HCT116 (cell line): ENCODE measurements at regions of chr14 and their contacts with region 1.

Region 1: DNA sequence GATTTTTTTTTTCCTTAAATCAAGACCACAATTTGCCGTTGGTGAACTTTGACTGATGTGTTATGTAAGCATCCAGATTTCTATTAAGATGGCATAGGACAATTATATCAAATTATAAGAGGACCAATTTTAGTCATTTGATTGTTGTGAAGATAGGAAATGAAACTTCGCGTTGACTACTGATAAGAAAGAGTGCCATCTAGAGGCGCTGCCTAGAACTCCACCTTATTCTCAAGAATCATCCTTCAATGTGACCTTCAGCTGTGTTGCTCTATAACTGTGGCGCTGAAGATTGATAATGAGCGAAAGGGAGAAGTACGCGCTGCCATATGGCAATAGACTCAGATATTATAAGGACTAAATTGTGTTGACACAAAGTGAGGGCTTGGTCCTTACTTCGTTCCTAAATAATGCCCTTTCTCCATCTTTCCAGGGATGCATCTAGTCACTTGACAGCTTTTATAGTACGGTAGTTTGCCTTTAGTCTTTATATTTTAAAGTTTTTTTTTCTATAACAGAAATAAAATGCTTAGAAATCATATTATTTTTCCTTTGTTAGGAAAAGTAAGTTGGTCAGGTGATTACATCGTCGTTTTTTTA is 350.8 kb upstream of the STXBP6 start:
- DNase-seq: no peak
- ATAC-seq: no peak
- H3K4me3 ChIP-seq: no peak overlapping the region
- H3K27ac ChIP-seq: no peak overlapping the region
- H3K4me1 ChIP-seq: no peaks in the 10 kb centered on the region
- H3K27me3 ChIP-seq: no peaks in the 10 kb centered on the region
- CTCF ChIP-seq: peak in 2 of 3 experiments; percentile 62 to 66; a peak in 4 of 6 replicates
- POLR2A ChIP-seq: no peak
- RAD21 ChIP-seq: no peak

Region 2: DNA sequence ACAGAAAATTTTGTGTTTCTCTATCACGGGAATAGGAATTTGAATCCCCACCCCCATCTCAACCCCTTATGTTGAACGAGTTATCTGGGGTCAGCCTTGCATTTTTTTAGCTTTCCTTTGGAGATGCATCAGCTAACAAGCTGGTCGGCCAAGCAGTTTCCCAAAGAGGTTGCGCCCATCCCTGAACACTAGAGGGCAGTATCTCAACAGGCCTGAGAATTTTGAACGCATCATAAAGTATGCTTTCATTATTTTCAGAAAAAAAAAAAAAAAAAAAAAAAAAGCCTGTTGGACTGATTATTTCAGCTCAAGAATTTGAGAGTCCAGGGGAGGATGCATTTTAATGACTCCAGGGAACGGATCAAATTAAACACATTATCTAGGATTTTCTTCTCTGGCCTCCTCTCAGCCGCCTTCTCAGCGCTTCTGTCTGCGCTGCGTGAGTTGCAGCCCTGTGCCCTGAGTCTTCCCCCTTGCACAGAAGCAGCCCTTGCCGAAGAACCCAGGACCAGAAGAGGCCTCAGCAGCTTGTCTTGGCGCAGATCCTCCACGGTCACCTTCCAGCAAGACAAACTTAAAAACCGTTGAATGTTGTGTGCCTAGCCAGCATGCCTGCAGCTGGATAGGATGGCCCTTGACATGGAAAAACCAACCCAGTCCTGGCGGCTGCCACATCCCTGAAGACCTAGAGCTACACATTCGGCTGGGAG is 690.1 kb before region 1 on chr14:
- CTCF ChIA-PET with region 1: interaction called, 3 read pairs
- POLR2A ChIA-PET with region 1: no interaction called
- RAD21 ChIA-PET with region 1: no interaction called
- intact Hi-C with region 1: loop called (anchors 10 kb)
- DNase-seq: peak; percentile 27
- ATAC-seq: peak; percentile 70; the same call in 1 of the 2 replicates
- H3K4me3 ChIP-seq: no peak overlapping the region
- H3K27ac ChIP-seq: no peak overlapping the region
- H3K4me1 ChIP-seq: no peaks in the 10 kb centered on the region
- H3K27me3 ChIP-seq: no peaks in the 10 kb centered on the region
- CTCF ChIP-seq: peak; percentile 23 to 85 (median 85); a peak in 4 of 6 replicates
- POLR2A ChIP-seq: no peak
- RAD21 ChIP-seq: peak; percentile 44; the same call in 1 of the 2 replicates

Region 3: DNA sequence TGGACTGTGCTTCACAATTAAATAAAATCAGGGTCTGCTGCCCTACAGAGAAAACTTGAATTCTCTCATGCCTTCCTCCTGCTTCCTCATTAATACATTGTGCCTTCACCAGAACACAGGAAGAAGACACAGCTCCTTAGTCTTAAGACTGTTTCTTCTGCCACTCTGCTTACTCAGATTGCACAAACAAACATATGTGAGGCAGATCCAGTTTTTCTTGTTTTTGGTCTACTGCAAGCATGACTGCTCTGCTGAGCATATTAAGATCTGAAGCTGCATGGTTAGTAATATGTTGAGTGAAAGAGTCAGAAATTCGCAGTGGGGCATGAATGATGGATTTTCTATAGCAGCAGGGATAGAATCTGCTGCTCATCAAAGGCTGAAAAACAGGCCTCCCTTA is 29.6 kb before region 1 on chr14:
- CTCF ChIA-PET with region 1: no interaction called
- POLR2A ChIA-PET with region 1: no interaction called
- RAD21 ChIA-PET with region 1: no interaction called
- intact Hi-C with region 1: no loop called
- DNase-seq: no peak
- ATAC-seq: no peak
- H3K4me3 ChIP-seq: no peak overlapping the region
- H3K27ac ChIP-seq: no peak overlapping the region
- H3K4me1 ChIP-seq: no peaks in the 10 kb centered on the region
- H3K27me3 ChIP-seq: no peaks in the 10 kb centered on the region
- CTCF ChIP-seq: no peak
- POLR2A ChIP-seq: no peak
- RAD21 ChIP-seq: no peak

Region 4: GRCh38 chr14:25516838-25517237 is 116.1 kb after region 1 on chr14:
- CTCF ChIA-PET with region 1: no interaction called
- POLR2A ChIA-PET with region 1: no interaction called
- RAD21 ChIA-PET with region 1: no interaction called
- intact Hi-C with region 1: no loop called
- DNase-seq: no peak
- ATAC-seq: no peak
- H3K4me3 ChIP-seq: no peak overlapping the region
- H3K27ac ChIP-seq: no peak overlapping the region
- H3K4me1 ChIP-seq: no peaks in the 10 kb centered on the region
- H3K27me3 ChIP-seq: no peaks in the 10 kb centered on the region
- CTCF ChIP-seq: no peak
- POLR2A ChIP-seq: no peak
- RAD21 ChIP-seq: no peak

Region 5: DNA sequence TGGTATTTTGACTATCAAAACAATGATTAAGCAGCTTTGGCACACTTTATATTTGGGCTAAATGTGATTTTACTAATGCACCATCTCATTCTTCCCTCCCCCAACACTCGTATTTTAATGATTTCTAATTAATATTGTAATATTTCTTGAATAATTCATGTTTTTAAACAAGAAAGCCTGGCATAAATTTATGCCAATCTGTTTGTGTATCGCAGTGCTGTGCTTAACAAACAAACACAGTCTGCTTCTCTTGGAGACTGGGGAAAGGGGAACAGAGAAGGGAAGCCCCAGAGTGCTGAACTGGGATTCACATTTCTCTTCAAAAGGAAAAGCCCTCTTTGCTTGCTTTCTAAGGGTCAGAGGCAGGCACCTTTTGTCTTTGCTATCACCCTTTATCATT is 146.1 kb after region 1 on chr14:
- CTCF ChIA-PET with region 1: no interaction called
- POLR2A ChIA-PET with region 1: no interaction called
- RAD21 ChIA-PET with region 1: no interaction called
- intact Hi-C with region 1: no loop called
- DNase-seq: no peak
- ATAC-seq: no peak
- H3K4me3 ChIP-seq: no peak overlapping the region
- H3K27ac ChIP-seq: no peak overlapping the region
- H3K4me1 ChIP-seq: no peaks in the 10 kb centered on the region
- H3K27me3 ChIP-seq: no peaks in the 10 kb centered on the region
- CTCF ChIP-seq: no peak
- POLR2A ChIP-seq: no peak
- RAD21 ChIP-seq: no peak